H1 (cell line): ENCODE measurements at regions of chr2 and their contacts with region 1.

Region 1: DNA sequence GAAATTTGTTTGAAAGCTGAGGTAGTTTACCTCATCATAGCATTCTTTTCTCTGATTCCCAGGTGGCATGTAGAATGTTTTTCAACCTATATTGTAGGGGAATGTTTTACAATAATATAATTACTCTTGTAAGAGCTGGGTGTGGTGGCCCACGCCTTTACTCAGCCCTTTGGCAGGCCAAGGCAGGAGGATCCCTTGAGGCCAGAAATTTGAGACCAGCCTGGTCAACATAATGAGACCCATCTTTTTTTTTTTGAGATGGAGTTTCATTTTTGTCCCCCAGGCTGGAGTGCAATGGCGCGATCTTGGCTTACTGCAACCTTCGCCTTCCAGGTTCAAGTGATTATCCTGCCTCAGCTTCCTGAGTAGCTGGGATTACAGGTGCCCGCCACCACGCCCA is 3.6 kb downstream of the USP39 start:
- DNase-seq: no peak
- H3K4me3 ChIP-seq: no peak overlapping the region
- H3K27ac ChIP-seq: no peak overlapping the region
- H3K4me1 ChIP-seq: peaks cover 0 to 5% (median 2%) of the 10 kb centered on the region in 4 experiments; a peak in 3 of 7 replicates
- H3K27me3 ChIP-seq: no peaks in the 10 kb centered on the region
- CTCF ChIP-seq: no peak
- EP300 ChIP-seq: no peak
- POLR2A ChIP-seq: no peak
- RAD21 ChIP-seq: no peak

Region 2: GRCh38 chr2:85524336-85524933 is 95.2 kb before region 1 on chr2:
- CTCF ChIA-PET with region 1: no interaction called
- POLR2A ChIA-PET with region 1: no interaction called
- DNase-seq: no peak
- H3K4me3 ChIP-seq: no peak overlapping the region
- H3K27ac ChIP-seq: no peak overlapping the region
- H3K4me1 ChIP-seq: peaks cover 5 to 12% (median 6%) of the 10 kb centered on the region in 4 experiments; a peak in 5 of 7 replicates
- H3K27me3 ChIP-seq: no peaks in the 10 kb centered on the region; a peak in 1 of 7 replicates
- CTCF ChIP-seq: no peak
- EP300 ChIP-seq: no peak
- POLR2A ChIP-seq: no peak
- RAD21 ChIP-seq: no peak

Region 3: GRCh38 chr2:85602476-85603234 is 17.0 kb before region 1 on chr2 and contains the start of gene TMEM150A:
- CTCF ChIA-PET with region 1: no interaction called
- POLR2A ChIA-PET with region 1: interaction called, 95 read pairs
- DNase-seq: peak; percentile 54 to 91
- H3K4me3 ChIP-seq: peak within 1 kb of the TSS; percentile 62 to 89 (median 82)
- H3K27ac ChIP-seq: peak within 1 kb of the TSS; percentile 20; the same call in 1 of the 2 replicates
- H3K4me1 ChIP-seq: peaks cover 0 to 5% (median 2%) of the 10 kb centered on the region in 4 experiments; a peak in 5 of 7 replicates
- H3K27me3 ChIP-seq: no peaks in the 10 kb centered on the region
- CTCF ChIP-seq: peak; percentile 11 to 23 (median 14); a peak in 3 of 4 replicates
- EP300 ChIP-seq: no peak
- POLR2A ChIP-seq: peak; percentile 19 to 51
- RAD21 ChIP-seq: peak in 1 of 2 experiments; percentile 7; a peak in 1 of 4 replicates
- total RNA-seq, gene TMEM150A: 19.8 and 22.4 TPM in 2 replicates

Region 4: DNA sequence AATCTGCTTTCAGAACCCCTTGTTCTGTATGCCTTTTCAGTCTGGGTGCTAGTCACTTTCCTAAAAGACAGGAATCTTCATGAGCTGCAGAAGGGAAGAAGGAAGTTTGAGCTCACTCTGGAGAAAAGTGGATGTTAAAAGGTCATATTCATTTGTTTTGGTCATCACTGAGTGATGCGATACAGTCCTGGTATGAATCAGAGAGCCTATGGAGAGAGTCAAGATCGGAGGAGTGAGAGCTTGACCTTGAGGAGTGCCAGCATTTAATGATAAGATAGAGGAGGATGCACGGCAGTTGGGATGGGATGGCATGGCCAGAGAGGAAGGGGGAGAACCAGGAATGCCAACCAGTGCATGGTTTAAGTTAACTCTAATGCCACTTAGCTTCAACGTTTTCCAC is 16.0 kb after region 1 on chr2:
- CTCF ChIA-PET with region 1: interaction called, 34 read pairs
- POLR2A ChIA-PET with region 1: interaction called, 30 read pairs
- DNase-seq: no peak
- H3K4me3 ChIP-seq: no peak overlapping the region
- H3K27ac ChIP-seq: no peak overlapping the region
- H3K4me1 ChIP-seq: no peaks in the 10 kb centered on the region
- H3K27me3 ChIP-seq: no peaks in the 10 kb centered on the region
- CTCF ChIP-seq: no peak
- EP300 ChIP-seq: no peak
- POLR2A ChIP-seq: no peak
- RAD21 ChIP-seq: no peak

Region 5: DNA sequence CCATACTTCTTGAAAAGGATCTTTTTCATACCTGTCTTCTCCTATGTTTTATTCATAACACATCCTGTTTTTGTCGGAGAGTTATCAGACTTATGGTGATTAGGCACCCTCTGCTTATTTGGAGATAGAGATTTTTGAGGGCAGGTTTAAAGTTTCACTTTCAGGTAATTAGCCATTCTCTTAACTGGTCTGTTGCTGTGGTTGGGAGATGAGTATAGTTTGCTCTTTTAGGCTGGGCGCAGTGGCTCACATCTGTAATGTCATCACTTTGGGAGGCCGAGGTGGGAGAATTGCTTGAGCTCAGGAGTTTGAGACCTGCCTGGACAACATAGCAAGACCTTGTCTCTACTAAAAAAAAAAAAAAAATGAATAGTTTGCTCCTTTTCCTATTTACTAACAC is 23.1 kb after region 1 on chr2:
- CTCF ChIA-PET with region 1: interaction called, 34 read pairs
- POLR2A ChIA-PET with region 1: interaction called, 16 read pairs
- DNase-seq: no peak
- H3K4me3 ChIP-seq: no peak overlapping the region
- H3K27ac ChIP-seq: no peak overlapping the region
- H3K4me1 ChIP-seq: no peaks in the 10 kb centered on the region
- H3K27me3 ChIP-seq: no peaks in the 10 kb centered on the region
- CTCF ChIP-seq: no peak
- EP300 ChIP-seq: no peak
- POLR2A ChIP-seq: no peak
- RAD21 ChIP-seq: no peak